Activated CD8-positive, alpha-beta memory T cell treated with anti-CD3 and anti-CD28 coated beads, Interleukin-2, amount 10 ng/mL, durations not matched to agents 7 days and 5 days (primary cell): ENCODE measurements at regions of chr1 and their contacts with region 1.

Region 1: DNA sequence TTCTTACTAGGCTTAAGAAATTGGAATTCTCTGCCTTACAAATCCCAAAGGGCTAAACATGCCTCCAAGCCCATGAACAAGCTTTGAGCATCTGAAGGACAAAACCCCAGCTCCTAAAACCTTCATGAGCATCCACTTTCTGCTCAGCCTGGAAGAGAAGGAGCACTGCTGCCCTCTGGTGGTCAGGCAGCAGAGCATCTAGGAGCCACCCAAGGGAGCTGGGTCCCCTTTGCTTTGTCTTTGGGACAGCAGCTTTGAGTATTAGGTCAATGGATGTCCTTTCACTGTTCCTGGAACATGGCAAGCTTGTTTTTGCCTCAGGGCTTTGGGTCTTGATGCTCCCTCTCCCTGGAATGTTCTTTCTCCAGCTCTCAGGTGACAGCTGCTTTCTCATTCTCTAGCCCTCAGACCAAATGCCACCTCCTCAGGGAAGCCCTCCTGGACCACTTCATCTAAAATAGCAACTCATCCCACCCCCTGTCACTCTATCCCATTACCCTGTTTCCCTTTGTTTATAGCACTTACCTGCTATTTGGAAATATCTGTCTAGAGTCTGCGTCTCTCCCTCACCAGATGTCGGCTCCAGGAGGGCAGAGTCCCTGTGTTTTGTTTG is 25.7 kb downstream of the RAB7B start:
- DNase-seq: peak; percentile 80
- ATAC-seq: peak; percentile 78
- H3K4me3 Mint-ChIP-seq: no peak overlapping the region
- H3K27ac Mint-ChIP-seq: no peak overlapping the region
- H3K4me1 Mint-ChIP-seq: no peaks in the 10 kb centered on the region
- H3K27me3 Mint-ChIP-seq: no peaks in the 10 kb centered on the region

Region 2: GRCh38 chr1:205591522-205592351 is 385.8 kb before region 1 on chr1:
- CTCF ChIA-PET with region 1: interaction called, 14 read pairs
- DNase-seq: peak; percentile 91
- ATAC-seq: peak; percentile 95
- H3K4me3 Mint-ChIP-seq: peak overlapping the region; percentile 82
- H3K27ac Mint-ChIP-seq: peak overlapping the region; percentile 85
- H3K4me1 Mint-ChIP-seq: peaks cover 26% of the 10 kb centered on the region
- H3K27me3 Mint-ChIP-seq: no peaks in the 10 kb centered on the region

Region 3: GRCh38 chr1:205791568-205792180 is 185.8 kb before region 1 on chr1:
- CTCF ChIA-PET with region 1: interaction called, 128 read pairs
- DNase-seq: peak; percentile 72
- ATAC-seq: peak; percentile 94
- H3K4me3 Mint-ChIP-seq: no peak overlapping the region
- H3K27ac Mint-ChIP-seq: no peak overlapping the region
- H3K4me1 Mint-ChIP-seq: no peaks in the 10 kb centered on the region
- H3K27me3 Mint-ChIP-seq: no peaks in the 10 kb centered on the region

Region 4: DNA sequence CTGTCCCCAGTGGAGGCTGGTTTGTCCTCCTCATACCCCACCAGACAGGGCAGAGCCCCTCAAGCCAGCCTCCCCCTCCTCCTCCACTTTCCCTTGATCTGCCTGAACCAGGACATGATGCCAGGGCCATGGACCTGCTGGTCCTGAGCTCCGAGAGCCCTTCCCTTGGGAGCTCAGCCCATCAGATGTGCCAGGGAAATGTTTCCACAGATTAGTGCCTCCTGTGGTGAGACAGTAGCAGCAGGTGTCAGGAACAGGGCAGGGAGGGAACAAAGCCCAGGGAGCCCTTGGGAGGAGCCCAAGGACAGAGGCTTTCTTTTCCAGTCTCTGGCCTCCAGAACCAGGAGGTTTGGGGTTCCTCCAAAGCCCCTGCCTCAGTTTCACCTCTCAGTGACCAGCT is 149.9 kb before region 1 on chr1:
- CTCF ChIA-PET with region 1: interaction called, 10 read pairs
- DNase-seq: no peak
- ATAC-seq: no peak
- H3K4me3 Mint-ChIP-seq: no peak overlapping the region
- H3K27ac Mint-ChIP-seq: no peak overlapping the region
- H3K4me1 Mint-ChIP-seq: peaks cover 13% of the 10 kb centered on the region
- H3K27me3 Mint-ChIP-seq: peaks cover 7% of the 10 kb centered on the region

Region 5: GRCh38 chr1:205950280-205950679 is 27.2 kb before region 1 on chr1:
- CTCF ChIA-PET with region 1: interaction called, 12 read pairs
- DNase-seq: no peak
- ATAC-seq: no peak
- H3K4me3 Mint-ChIP-seq: no peak overlapping the region
- H3K27ac Mint-ChIP-seq: no peak overlapping the region
- H3K4me1 Mint-ChIP-seq: no peaks in the 10 kb centered on the region
- H3K27me3 Mint-ChIP-seq: peaks cover 26% of the 10 kb centered on the region

Region 6: GRCh38 chr1:205991237-205991636 is 13.7 kb after region 1 on chr1:
- CTCF ChIA-PET with region 1: interaction called, 21 read pairs
- DNase-seq: no peak
- ATAC-seq: no peak
- H3K4me3 Mint-ChIP-seq: no peak overlapping the region
- H3K27ac Mint-ChIP-seq: no peak overlapping the region
- H3K4me1 Mint-ChIP-seq: no peaks in the 10 kb centered on the region
- H3K27me3 Mint-ChIP-seq: peaks cover 25% of the 10 kb centered on the region

Region 7: DNA sequence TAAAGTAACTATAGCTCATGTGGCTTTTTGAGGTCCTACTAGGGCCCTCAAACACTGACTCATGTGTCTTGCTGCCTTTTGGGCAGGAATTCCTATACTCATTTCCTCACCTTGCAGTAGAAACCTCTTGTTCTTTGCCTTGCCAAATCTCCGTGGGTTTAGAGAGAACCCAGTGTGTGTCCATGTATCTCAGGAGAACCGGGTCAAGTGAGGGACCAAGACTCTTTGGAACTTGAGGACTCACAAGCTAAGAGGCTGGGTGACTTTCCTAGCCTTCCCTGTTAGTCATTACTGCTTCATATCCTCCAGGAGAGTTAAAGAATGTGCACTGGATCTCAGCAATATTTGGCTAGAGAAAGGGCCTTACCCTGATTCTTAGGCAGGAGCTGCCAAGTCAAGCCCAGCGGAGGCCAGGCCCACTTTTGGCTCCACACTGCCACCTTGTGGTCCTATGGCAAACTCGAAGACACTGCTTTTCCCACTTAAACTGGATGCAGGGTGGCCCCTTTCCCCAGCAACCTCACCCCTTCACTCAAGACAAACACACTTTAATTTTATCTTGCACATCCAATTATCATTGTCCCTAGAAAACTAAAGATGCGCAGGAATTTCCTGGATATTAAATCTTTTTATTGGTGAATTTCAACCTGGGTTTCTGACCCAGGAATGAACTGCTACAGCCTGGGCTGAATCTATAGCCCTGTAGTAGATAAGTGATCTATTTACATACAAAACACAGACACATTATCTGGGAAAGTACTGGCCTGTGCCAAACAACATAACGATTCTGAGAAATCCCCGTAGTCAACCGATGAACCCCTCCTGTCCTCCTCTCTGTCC is 129.0 kb after region 1 on chr1:
- CTCF ChIA-PET with region 1: interaction called, 35 read pairs
- DNase-seq: peak; percentile 81
- ATAC-seq: peak; percentile 92
- H3K4me3 Mint-ChIP-seq: no peak overlapping the region
- H3K27ac Mint-ChIP-seq: no peak overlapping the region
- H3K4me1 Mint-ChIP-seq: no peaks in the 10 kb centered on the region
- H3K27me3 Mint-ChIP-seq: peaks cover 17% of the 10 kb centered on the region

Region 8: GRCh38 chr1:206143537-206144172 is 166.1 kb after region 1 on chr1:
- CTCF ChIA-PET with region 1: no interaction called
- DNase-seq: no peak
- ATAC-seq: no peak
- H3K4me3 Mint-ChIP-seq: no peak overlapping the region
- H3K27ac Mint-ChIP-seq: no peak overlapping the region
- H3K4me1 Mint-ChIP-seq: no peaks in the 10 kb centered on the region
- H3K27me3 Mint-ChIP-seq: peaks cover 69% of the 10 kb centered on the region